PC-9 (cell line): ENCODE measurements at regions of chr11 and their contacts with region 1.

Region 1: GRCh38 chr11:111766093-111766833 is at the start of gene PPP2R1B:
- DNase-seq: peak; percentile 76 to 85
- H3K4me3 ChIP-seq: peak within 1 kb of the TSS; percentile 66
- H3K27ac ChIP-seq: peak within 1 kb of the TSS; percentile 83
- H3K4me1 ChIP-seq: peaks cover 27% of the 10 kb centered on the region
- H3K27me3 ChIP-seq: no peaks in the 10 kb centered on the region
- CTCF ChIP-seq: no peak
- total RNA-seq, gene PPP2R1B: 28.9 and 36.4 TPM in 2 replicates

Region 2: GRCh38 chr11:111714522-111714921 is 51.7 kb before region 1 on chr11:
- CTCF ChIA-PET with region 1: no interaction called
- POLR2A ChIA-PET with region 1: interaction called, 14 read pairs
- intact Hi-C with region 1: no loop called
- DNase-seq: no peak
- H3K4me3 ChIP-seq: no peak overlapping the region
- H3K27ac ChIP-seq: no peak overlapping the region
- H3K4me1 ChIP-seq: no peaks in the 10 kb centered on the region
- H3K27me3 ChIP-seq: no peaks in the 10 kb centered on the region
- CTCF ChIP-seq: no peak

Region 3: DNA sequence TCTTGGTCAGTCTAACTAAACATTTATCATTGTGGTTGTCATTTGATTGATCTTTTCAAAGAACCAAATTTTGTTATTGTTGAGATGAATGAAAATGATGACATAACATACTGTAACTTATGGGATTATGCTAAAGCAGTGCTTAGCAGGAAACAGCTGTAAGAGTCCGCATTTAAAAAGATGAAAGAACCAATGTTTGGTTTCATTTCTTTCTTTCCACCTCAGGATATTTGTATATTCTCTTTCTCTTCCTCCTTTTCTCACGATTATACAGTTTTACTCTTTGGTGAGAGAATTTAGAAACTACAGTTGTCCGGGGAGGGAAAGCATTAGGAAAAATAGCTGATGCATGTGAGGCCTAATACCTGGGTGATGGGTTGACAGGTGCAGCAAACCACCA is 284.5 kb after region 1 on chr11:
- CTCF ChIA-PET with region 1: no interaction called
- POLR2A ChIA-PET with region 1: interaction called, 15 read pairs
- intact Hi-C with region 1: no loop called
- DNase-seq: no peak
- H3K4me3 ChIP-seq: no peak overlapping the region
- H3K27ac ChIP-seq: no peak overlapping the region
- H3K4me1 ChIP-seq: peaks cover 12% of the 10 kb centered on the region
- H3K27me3 ChIP-seq: no peaks in the 10 kb centered on the region
- CTCF ChIP-seq: no peak